ENCODE measurements at regions of chr6 and their contacts with region 1.

Region 1: GRCh38 chr6:36546920-36547645 is at the start of gene STK38:
- DNase-seq: no peak
- ATAC-seq: peak; percentile 97
- H3K4me3 ChIP-seq: peak within 1 kb of the TSS; percentile 64 to 98
- H3K27ac ChIP-seq: peak within 1 kb of the TSS; percentile 87
- H3K4me1 ChIP-seq: peaks cover 10% of the 10 kb centered on the region
- H3K27me3 ChIP-seq: no peaks in the 10 kb centered on the region
- CTCF ChIP-seq: no peak; the same call in 1 of the 2 replicates
- total RNA-seq, gene STK38: 44.7 TPM

Region 2: GRCh38 chr6:36504982-36505381 is 42.1 kb before region 1 on chr6:
- CTCF ChIA-PET with region 1: no interaction called
- POLR2A ChIA-PET with region 1: no interaction called
- in situ Hi-C with region 1: no loop called
- intact Hi-C with region 1: no loop called
- DNase-seq: no peak
- ATAC-seq: no peak
- H3K4me3 ChIP-seq: no peak overlapping the region
- H3K27ac ChIP-seq: no peak overlapping the region
- H3K4me1 ChIP-seq: no peaks in the 10 kb centered on the region
- H3K27me3 ChIP-seq: no peaks in the 10 kb centered on the region
- CTCF ChIP-seq: no peak

Region 3: DNA sequence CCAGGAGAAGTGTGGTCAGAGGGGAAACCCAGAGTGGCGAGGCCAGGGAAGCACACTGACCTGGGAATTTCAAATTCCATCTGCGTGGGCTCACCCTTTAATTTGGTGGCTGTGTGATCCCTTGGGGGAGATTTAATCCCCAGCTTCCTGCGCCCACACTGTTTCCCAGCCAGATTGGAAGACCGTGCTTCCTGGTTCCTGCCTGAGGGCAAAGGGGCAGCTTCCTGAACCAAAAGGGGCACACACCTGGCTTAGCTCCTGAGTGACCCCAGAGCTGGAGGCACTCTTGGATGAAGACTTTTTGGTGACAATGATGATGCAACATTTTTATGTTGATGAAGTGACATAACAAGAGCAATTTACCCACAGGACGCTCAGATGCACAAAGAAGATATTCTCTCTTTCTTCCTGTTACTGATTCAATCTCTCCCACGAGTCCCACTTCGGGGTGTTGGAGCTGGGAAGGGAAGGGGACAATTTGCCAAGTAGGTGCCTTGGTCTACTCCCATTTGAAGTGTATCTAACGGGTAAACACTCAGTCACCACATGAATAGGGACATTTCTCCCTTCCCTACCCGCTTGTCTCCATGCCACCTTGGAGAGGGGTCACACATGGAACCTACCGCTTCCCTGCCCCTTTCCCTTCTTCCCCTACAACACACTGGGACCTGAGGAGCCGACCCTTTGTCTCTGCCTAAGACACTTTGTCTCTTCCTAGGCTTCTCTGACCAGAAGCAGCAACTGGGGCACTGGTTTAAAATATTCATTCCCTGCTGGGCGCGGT is 102.8 kb after region 1 on chr6:
- CTCF ChIA-PET with region 1: interaction called, 10 read pairs
- POLR2A ChIA-PET with region 1: no interaction called
- in situ Hi-C with region 1: no loop called
- intact Hi-C with region 1: no loop called
- DNase-seq: no peak
- ATAC-seq: no peak
- H3K4me3 ChIP-seq: no peak overlapping the region
- H3K27ac ChIP-seq: peak overlapping the region; percentile 34; the same call in 1 of the 2 replicates
- H3K4me1 ChIP-seq: no peaks in the 10 kb centered on the region
- H3K27me3 ChIP-seq: no peaks in the 10 kb centered on the region
- CTCF ChIP-seq: no peak